ENCODE measurements at regions of chr1 and their contacts with region 1.

Region 1: DNA sequence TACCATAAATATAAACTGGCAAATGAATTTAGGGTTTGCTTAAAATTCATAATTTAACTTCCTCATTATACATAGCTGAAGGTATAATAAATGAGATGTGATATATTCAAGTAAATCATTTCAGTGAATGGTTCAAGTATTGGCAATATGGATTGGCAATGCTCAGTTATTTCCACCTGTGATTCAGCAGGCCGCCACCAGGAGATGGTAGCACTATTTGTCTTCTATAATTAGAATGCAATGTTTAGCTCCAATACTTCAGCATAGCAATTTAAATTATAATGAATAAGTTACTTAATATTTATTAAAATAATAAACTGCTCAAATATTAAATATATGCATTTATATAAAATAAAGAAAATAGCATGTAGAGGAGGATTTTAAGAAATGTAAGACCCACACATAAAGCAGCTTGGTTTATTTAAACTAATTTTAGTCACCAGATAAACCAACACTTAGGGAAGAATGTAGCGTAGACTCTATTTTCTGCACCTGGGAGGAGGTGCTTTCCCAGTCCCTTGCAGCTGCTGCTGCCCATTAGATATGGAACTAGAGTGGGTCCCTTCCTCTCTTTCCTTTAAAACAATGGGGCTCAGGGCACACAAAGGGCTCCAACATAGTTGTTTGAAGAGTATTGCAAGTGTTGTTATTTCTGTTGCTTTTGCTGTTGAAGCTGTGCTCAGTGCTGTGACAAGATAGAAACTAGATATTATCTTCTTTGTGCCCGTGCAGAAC is 62.1 kb downstream of the PLPPR4 start:
- DNase-seq: no peak
- H3K4me3 ChIP-seq: no peak overlapping the region
- H3K27ac ChIP-seq: no peak overlapping the region; the same call in 1 of the 2 replicates
- H3K4me1 ChIP-seq: peaks cover 0 to 8% (median 5%) of the 10 kb centered on the region in 4 experiments; a peak in 3 of 7 replicates
- H3K27me3 ChIP-seq: no peaks in the 10 kb centered on the region
- CTCF ChIP-seq: peak in 2 of 3 experiments; percentile 21 to 48; a peak in 2 of 4 replicates
- EP300 ChIP-seq: no peak
- POLR2A ChIP-seq: no peak
- RAD21 ChIP-seq: peak in 1 of 2 experiments; percentile 43; a peak in 3 of 4 replicates

Region 2: GRCh38 chr1:99106274-99106673 is 220.1 kb before region 1 on chr1:
- CTCF ChIA-PET with region 1: no interaction called
- POLR2A ChIA-PET with region 1: no interaction called
- DNase-seq: no peak
- H3K4me3 ChIP-seq: no peak overlapping the region
- H3K27ac ChIP-seq: no peak overlapping the region
- H3K4me1 ChIP-seq: no peaks in the 10 kb centered on the region
- H3K27me3 ChIP-seq: no peaks in the 10 kb centered on the region
- CTCF ChIP-seq: no peak
- EP300 ChIP-seq: no peak
- POLR2A ChIP-seq: no peak
- RAD21 ChIP-seq: no peak

Region 3: DNA sequence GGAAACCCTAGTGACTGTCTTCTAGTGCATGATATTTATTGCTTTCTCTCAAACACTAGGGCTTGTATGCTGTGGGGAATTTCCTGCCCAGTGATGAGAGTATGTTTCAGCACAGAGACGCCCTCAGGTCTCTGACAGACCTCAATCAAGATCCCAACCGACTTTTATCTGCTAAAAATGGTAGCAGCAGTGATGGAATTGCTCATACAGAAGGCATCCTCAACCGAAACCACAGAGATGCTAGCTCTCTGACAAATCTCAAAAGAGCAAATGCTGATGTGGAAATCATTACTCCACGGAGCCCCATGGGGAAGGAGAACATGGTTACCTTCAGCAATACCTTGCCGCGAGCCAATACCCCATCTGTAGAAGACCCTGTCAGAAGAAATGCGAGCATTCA is 20.8 kb before region 1 on chr1:
- CTCF ChIA-PET with region 1: interaction called, 18 read pairs
- POLR2A ChIA-PET with region 1: no interaction called
- DNase-seq: no peak
- H3K4me3 ChIP-seq: no peak overlapping the region
- H3K27ac ChIP-seq: no peak overlapping the region
- H3K4me1 ChIP-seq: peaks cover 0 to 3% (median 0%) of the 10 kb centered on the region in 4 experiments; a peak in 1 of 7 replicates
- H3K27me3 ChIP-seq: no peaks in the 10 kb centered on the region
- CTCF ChIP-seq: no peak
- EP300 ChIP-seq: no peak
- POLR2A ChIP-seq: no peak
- RAD21 ChIP-seq: no peak

Region 4: GRCh38 chr1:99348397-99349132 is 22.2 kb after region 1 on chr1:
- CTCF ChIA-PET with region 1: interaction called, 11 read pairs
- POLR2A ChIA-PET with region 1: no interaction called
- DNase-seq: no peak
- H3K4me3 ChIP-seq: no peak overlapping the region
- H3K27ac ChIP-seq: no peak overlapping the region
- H3K4me1 ChIP-seq: no peaks in the 10 kb centered on the region
- H3K27me3 ChIP-seq: no peaks in the 10 kb centered on the region
- CTCF ChIP-seq: no peak
- EP300 ChIP-seq: no peak
- POLR2A ChIP-seq: no peak
- RAD21 ChIP-seq: no peak

Region 5: GRCh38 chr1:99707535-99708142 is 381.3 kb after region 1 on chr1:
- CTCF ChIA-PET with region 1: interaction called, 11 read pairs
- POLR2A ChIA-PET with region 1: no interaction called
- DNase-seq: peak in 1 of 2 experiments; percentile 82
- H3K4me3 ChIP-seq: no peak overlapping the region
- H3K27ac ChIP-seq: no peak overlapping the region
- H3K4me1 ChIP-seq: no peaks in the 10 kb centered on the region
- H3K27me3 ChIP-seq: no peaks in the 10 kb centered on the region
- CTCF ChIP-seq: peak in 2 of 3 experiments; percentile 71 to 84; a peak in 3 of 4 replicates
- EP300 ChIP-seq: no peak
- POLR2A ChIP-seq: no peak
- RAD21 ChIP-seq: peak; percentile 94 to 95

Measured in H1 (cell line).